ENCODE measurements at regions of chr12 and their contacts with region 1.

Region 1: GRCh38 chr12:9347328-9348127 is 139.3 kb upstream of the PZP start:
- DNase-seq: peak; percentile 97
- H3K4me3 ChIP-seq: no peak overlapping the region
- H3K27ac ChIP-seq: peak overlapping the region; percentile 83
- H3K4me1 ChIP-seq: peaks cover 41% of the 10 kb centered on the region
- H3K27me3 ChIP-seq: no peaks in the 10 kb centered on the region
- CTCF ChIP-seq: no peak

Region 2: GRCh38 chr12:9163392-9163791 is 184.1 kb before region 1 on chr12:
- CTCF ChIA-PET with region 1: no interaction called
- dilution Hi-C with region 1: no loop called
- in situ Hi-C with region 1: no loop called
- intact Hi-C with region 1: no loop called
- DNase-seq: peak; percentile 69
- H3K4me3 ChIP-seq: no peak overlapping the region
- H3K27ac ChIP-seq: peak overlapping the region; percentile 37
- H3K4me1 ChIP-seq: peaks cover 19% of the 10 kb centered on the region
- H3K27me3 ChIP-seq: no peaks in the 10 kb centered on the region
- CTCF ChIP-seq: no peak

Region 3: GRCh38 chr12:9364224-9365176 is 17.0 kb after region 1 on chr12:
- CTCF ChIA-PET with region 1: no interaction called
- dilution Hi-C with region 1: no loop called
- in situ Hi-C with region 1: no loop called
- intact Hi-C with region 1: loop called (anchors 2 kb)
- DNase-seq: peak; percentile 99
- H3K4me3 ChIP-seq: peak overlapping the region; percentile 6 to 22 (median 21)
- H3K27ac ChIP-seq: peak overlapping the region; percentile 98
- H3K4me1 ChIP-seq: peaks cover 36% of the 10 kb centered on the region
- H3K27me3 ChIP-seq: no peaks in the 10 kb centered on the region
- CTCF ChIP-seq: no peak